ENCODE measurements at regions of chr9 and their contacts with region 1.

Region 1: GRCh38 chr9:6015278-6016157 is at the start of gene RANBP6:
- DNase-seq: peak; percentile 87 to 94
- ATAC-seq: peak; percentile 98 to 100 (median 100)
- H3K4me3 ChIP-seq: peak within 1 kb of the TSS; percentile 80
- H3K4me3 Mint-ChIP-seq: peak within 1 kb of the TSS; percentile 98
- H3K27ac ChIP-seq: peak within 1 kb of the TSS; percentile 82
- H3K27ac Mint-ChIP-seq: peak within 1 kb of the TSS; percentile 96 to 98
- H3K4me1 ChIP-seq: peaks cover 16% of the 10 kb centered on the region
- H3K4me1 Mint-ChIP-seq: peaks cover 32 to 43% of the 10 kb centered on the region in 2 donors
- H3K27me3 ChIP-seq: no peaks in the 10 kb centered on the region
- H3K27me3 Mint-ChIP-seq: no peaks in the 10 kb centered on the region
- CTCF ChIP-seq: no peak
- total RNA-seq, gene RANBP6: 27.5 to 31.3 (median 29.6) TPM

Region 2: DNA sequence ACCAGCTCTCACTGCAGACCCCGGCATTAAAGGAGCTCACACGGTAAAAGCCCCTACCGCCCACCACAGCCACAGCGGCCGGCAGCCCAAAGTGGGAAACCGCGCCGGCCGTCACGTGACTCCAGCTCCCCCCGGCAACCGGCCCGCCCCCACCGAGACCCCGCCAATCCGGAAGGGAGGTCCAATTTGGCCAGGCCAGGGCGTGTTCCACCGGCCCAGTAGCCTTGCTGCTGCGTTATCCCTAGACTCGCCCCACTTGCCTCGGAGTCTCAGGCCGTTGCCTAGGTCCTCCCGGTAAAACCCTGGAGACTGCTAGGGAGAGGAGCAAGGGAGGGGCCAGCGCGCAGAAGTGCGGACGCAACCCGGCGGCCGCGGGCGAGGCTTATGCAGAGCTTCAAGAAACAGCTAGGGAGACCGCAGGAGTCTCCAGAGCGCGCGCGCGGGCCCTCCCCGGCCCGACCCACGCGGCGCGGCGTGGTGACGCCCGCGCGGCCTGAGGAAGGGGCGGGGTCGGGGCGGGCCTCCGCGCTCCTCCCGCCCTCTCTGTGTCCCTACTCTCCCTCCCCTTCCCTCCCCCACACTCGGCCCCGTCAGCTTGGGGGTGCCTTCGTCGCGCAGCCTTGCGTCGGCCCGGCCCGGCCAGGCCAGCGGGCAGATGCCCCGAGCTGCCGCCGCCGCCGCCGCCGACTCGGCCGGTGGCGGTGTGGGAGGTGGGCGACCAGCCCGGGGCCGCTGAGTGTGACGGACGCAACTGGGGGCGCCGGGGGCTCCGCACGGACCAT is 386.8 kb before region 1 on chr9 and contains the start of gene RIC1:
- intact Hi-C with region 1: loop called (anchors 2 kb)
- DNase-seq: peak; percentile 89 to 94
- ATAC-seq: peak; percentile 87 to 97 (median 88)
- H3K4me3 ChIP-seq: peak within 1 kb of the TSS; percentile 99
- H3K4me3 Mint-ChIP-seq: peak within 1 kb of the TSS; percentile 99
- H3K27ac ChIP-seq: peak within 1 kb of the TSS; percentile 92
- H3K27ac Mint-ChIP-seq: peak within 1 kb of the TSS; percentile 93
- H3K4me1 ChIP-seq: peaks cover 27% of the 10 kb centered on the region
- H3K4me1 Mint-ChIP-seq: peaks cover 49 to 57% of the 10 kb centered on the region in 2 donors
- H3K27me3 ChIP-seq: no peaks in the 10 kb centered on the region
- H3K27me3 Mint-ChIP-seq: no peaks in the 10 kb centered on the region
- CTCF ChIP-seq: no peak
- total RNA-seq, gene RIC1: 23.5 to 33.9 (median 31.8) TPM

Region 3: GRCh38 chr9:6049798-6050197 is 34.3 kb after region 1 on chr9:
- intact Hi-C with region 1: loop called (anchors 2 kb)
- DNase-seq: peak in 1 of 2 donors; percentile 44
- ATAC-seq: peak; percentile 62 to 74 (median 64)
- H3K4me3 ChIP-seq: no peak overlapping the region
- H3K4me3 Mint-ChIP-seq: no peak overlapping the region
- H3K27ac ChIP-seq: no peak overlapping the region
- H3K27ac Mint-ChIP-seq: no peak overlapping the region
- H3K4me1 ChIP-seq: no peaks in the 10 kb centered on the region
- H3K4me1 Mint-ChIP-seq: peaks cover 4 to 10% of the 10 kb centered on the region in 2 donors
- H3K27me3 ChIP-seq: no peaks in the 10 kb centered on the region
- H3K27me3 Mint-ChIP-seq: peaks cover 12% of the 10 kb centered on the region in 2 donors
- CTCF ChIP-seq: peak; percentile 23

Region 4: DNA sequence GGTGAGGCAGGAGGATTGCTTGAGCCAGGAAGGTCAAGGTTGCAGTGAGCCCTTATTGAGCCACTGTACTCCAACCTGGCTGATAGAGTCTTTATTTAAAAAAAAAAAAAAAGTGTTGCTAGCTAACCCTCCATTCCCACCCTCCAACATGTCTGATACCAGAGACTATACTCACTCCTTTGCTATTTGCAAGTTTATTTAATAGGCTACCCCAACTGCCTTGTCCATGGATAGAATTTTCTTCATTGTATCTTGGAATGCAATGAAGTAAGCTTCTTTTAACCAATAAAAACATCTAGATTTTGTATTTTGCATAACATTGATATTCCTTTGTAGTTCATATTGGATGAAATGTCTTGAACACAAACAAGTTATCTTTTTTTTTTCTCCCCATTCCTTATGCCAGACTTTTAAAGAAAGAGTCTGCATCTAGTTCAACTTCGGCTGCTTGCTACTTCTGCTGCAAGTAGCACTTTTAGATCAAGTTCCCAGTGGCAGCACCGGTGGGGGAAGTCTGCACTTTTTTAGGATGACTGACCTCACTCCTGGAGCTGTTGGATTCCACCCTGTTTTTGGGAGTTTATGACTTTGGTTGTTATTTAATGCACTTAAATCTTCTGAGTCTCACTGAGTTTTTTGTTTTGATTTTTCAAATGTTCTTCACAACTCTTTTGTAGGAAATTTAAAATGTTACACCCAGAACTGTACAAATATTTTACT is 510.0 kb after region 1 on chr9:
- intact Hi-C with region 1: no loop called
- DNase-seq: no peak
- ATAC-seq: no peak
- H3K4me3 ChIP-seq: no peak overlapping the region
- H3K4me3 Mint-ChIP-seq: no peak overlapping the region
- H3K27ac ChIP-seq: no peak overlapping the region
- H3K27ac Mint-ChIP-seq: no peak overlapping the region
- H3K4me1 ChIP-seq: no peaks in the 10 kb centered on the region
- H3K4me1 Mint-ChIP-seq: no peaks in the 10 kb centered on the region
- H3K27me3 ChIP-seq: no peaks in the 10 kb centered on the region
- H3K27me3 Mint-ChIP-seq: no peaks in the 10 kb centered on the region
- CTCF ChIP-seq: no peak